ENCODE measurements at regions of chr1 and their contacts with region 1.

Region 1: GRCh38 chr1:183704131-183704530 is 51.0 kb upstream of the APOBEC4 start:
- DNase-seq: no peak
- H3K4me3 ChIP-seq: no peak overlapping the region
- H3K27ac ChIP-seq: no peak overlapping the region
- H3K4me1 ChIP-seq: no peaks in the 10 kb centered on the region
- H3K27me3 ChIP-seq: no peaks in the 10 kb centered on the region
- CTCF ChIP-seq: no peak
- POLR2A ChIP-seq: no peak

Region 2: GRCh38 chr1:183734543-183735036 is 30.5 kb after region 1 on chr1:
- intact Hi-C with region 1: loop called (anchors 2 kb)
- DNase-seq: no peak
- H3K4me3 ChIP-seq: peak overlapping the region in 1 of 3 donors; percentile 45
- H3K27ac ChIP-seq: peak overlapping the region in 1 of 2 donors; percentile 67
- H3K4me1 ChIP-seq: no peaks in the 10 kb centered on the region
- H3K27me3 ChIP-seq: no peaks in the 10 kb centered on the region
- CTCF ChIP-seq: no peak
- POLR2A ChIP-seq: no peak

Measured in breast epithelium (tissue), 4 donors.